Natural killer cell (primary cell): ENCODE measurements at regions of chr3 and their contacts with region 1.

Region 1: GRCh38 chr3:51845129-51845528 is 16.3 kb upstream of the IQCF2 start:
- DNase-seq: no peak
- ATAC-seq: no peak
- H3K4me3 ChIP-seq: no peak overlapping the region
- H3K4me3 Mint-ChIP-seq: no peak overlapping the region
- H3K27ac ChIP-seq: no peak overlapping the region
- H3K27ac Mint-ChIP-seq: no peak overlapping the region
- H3K4me1 ChIP-seq: no peaks in the 10 kb centered on the region
- H3K4me1 Mint-ChIP-seq: no peaks in the 10 kb centered on the region
- H3K27me3 ChIP-seq: peaks cover 10% of the 10 kb centered on the region
- H3K27me3 Mint-ChIP-seq: peaks cover 32 to 62% of the 10 kb centered on the region in 2 donors
- CTCF ChIP-seq: no peak

Region 2: DNA sequence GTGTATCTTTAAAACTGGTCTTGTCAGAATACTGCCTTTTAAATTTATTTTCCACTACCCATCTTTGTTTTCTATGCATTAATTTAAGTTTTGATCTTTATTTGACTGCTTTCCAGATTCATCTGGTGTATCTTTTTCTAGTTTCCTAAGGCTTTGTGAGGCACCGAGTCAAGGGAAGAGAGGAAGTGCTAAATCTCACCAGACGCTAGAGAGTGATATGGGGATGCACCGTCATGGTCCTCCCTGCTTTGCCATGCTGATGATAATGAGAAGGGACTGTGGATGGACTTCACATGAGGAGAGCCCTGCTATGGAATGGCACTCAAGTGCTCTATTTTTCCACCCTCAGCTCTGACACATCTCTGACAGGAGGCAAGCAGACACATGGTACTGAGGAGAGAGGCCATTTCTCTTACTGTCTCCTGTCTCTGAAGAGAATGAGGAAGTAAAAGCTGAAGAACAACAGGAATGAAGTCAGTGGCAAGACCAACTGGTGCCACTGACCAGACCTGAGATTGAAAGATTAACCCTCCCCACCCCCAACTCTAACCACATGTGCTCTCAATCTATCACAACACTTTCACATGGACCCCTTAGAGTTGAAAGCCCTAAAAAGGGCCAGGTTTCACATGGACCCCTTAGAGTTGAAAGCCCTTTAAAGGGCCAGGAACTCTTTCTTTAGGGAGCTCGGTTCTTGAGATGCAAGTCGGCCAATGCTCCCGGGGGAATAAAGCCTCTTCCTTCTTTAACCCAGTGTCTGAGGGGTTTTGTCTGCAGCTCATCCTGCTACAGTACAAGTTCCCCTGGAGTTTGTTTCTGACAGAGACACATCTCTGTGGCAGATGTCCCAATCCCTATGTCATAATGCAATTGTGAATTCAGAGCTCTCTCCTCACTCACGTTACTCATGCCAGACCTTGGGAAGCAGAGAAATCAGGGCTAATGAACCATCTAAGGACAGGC is 15.9 kb after region 1 on chr3 and contains the start of gene IQCF2:
- intact Hi-C with region 1: loop called (anchors 1 kb)
- DNase-seq: no peak
- ATAC-seq: no peak
- H3K4me3 ChIP-seq: no peak within 1 kb of the TSS
- H3K4me3 Mint-ChIP-seq: no peak within 1 kb of the TSS
- H3K27ac ChIP-seq: no peak within 1 kb of the TSS
- H3K27ac Mint-ChIP-seq: no peak within 1 kb of the TSS
- H3K4me1 ChIP-seq: peaks cover 5% of the 10 kb centered on the region
- H3K4me1 Mint-ChIP-seq: no peaks in the 10 kb centered on the region
- H3K27me3 ChIP-seq: no peaks in the 10 kb centered on the region
- H3K27me3 Mint-ChIP-seq: peaks cover 7 to 24% of the 10 kb centered on the region in 2 donors
- CTCF ChIP-seq: no peak
- total RNA-seq, gene IQCF2: not detected